ENCODE measurements at regions of chr6 and their contacts with region 1.

Region 1: GRCh38 chr6:34154668-34155447 is 9.0 kb upstream of the GRM4 start:
- DNase-seq: peak; percentile 61
- ATAC-seq: peak; percentile 85 to 87

Region 2: GRCh38 chr6:33771146-33772081 is 383.4 kb before region 1 on chr6:
- intact Hi-C with region 1: loop called (anchors 5 kb)
- DNase-seq: peak; percentile 80
- ATAC-seq: peak; percentile 84

Region 3: DNA sequence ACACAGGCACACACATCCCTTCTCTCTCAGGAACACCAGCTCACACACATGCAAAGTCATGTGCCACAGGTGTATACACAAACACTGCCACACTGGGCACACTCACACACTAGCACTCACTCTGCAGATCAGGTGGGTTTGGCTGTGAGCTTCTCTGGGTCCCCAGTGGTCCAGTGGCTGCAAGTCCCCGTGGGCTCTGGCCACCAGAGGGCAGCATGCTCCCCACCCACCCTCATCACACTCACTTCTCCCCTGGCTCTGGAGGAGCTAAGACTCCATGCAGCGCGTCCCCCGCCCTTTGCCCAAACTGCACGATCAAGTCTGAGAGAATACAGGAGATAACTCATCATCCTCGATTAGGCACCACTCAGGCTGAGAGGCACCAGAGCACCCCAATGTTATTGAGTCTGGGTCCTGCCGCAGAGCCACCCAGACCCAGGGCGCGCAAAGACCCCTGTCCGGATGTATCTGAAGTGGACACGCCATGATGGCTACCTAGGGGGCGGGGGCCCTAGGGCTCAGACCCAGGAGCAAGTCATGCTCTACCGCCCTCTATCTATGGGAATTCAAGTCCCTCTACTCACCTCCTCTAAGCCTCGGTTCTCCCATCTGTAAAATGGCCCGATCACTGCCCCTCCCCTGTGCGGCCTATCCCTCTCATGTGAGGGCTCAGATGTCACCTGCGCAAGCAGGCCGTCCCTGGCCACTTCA is 99.5 kb before region 1 on chr6:
- intact Hi-C with region 1: loop called (anchors 2 to 5 kb)
- DNase-seq: peak; percentile 52
- ATAC-seq: peak; percentile 58 to 62